ENCODE measurements at regions of chr3 and their contacts with region 1.

Region 1: GRCh38 chr3:101988591-101988990 is 139.3 kb downstream of the NFKBIZ start:
- DNase-seq: no peak
- ATAC-seq: peak; percentile 36
- H3K4me3 Mint-ChIP-seq: no peak overlapping the region
- H3K27ac Mint-ChIP-seq: peak overlapping the region; percentile 75
- H3K4me1 Mint-ChIP-seq: peaks cover 52% of the 10 kb centered on the region
- H3K27me3 Mint-ChIP-seq: no peaks in the 10 kb centered on the region
- CTCF ChIP-seq: no peak

Region 2: GRCh38 chr3:101976473-101976872 is 12.1 kb before region 1 on chr3:
- CTCF ChIA-PET with region 1: no interaction called
- POLR2A ChIA-PET with region 1: interaction called, 4 read pairs
- intact Hi-C with region 1: loop called (anchors 1 kb)
- DNase-seq: no peak
- ATAC-seq: no peak
- H3K4me3 Mint-ChIP-seq: peak overlapping the region; percentile 11
- H3K27ac Mint-ChIP-seq: no peak overlapping the region
- H3K4me1 Mint-ChIP-seq: peaks cover 32% of the 10 kb centered on the region
- H3K27me3 Mint-ChIP-seq: no peaks in the 10 kb centered on the region
- CTCF ChIP-seq: no peak

Region 3: GRCh38 chr3:102224128-102224527 is 235.5 kb after region 1 on chr3:
- CTCF ChIA-PET with region 1: interaction called, 4 read pairs
- POLR2A ChIA-PET with region 1: no interaction called
- intact Hi-C with region 1: loop called (anchors 1 kb)
- DNase-seq: no peak
- ATAC-seq: peak; percentile 72
- H3K4me3 Mint-ChIP-seq: no peak overlapping the region
- H3K27ac Mint-ChIP-seq: peak overlapping the region; percentile 36
- H3K4me1 Mint-ChIP-seq: peaks cover 44% of the 10 kb centered on the region
- H3K27me3 Mint-ChIP-seq: no peaks in the 10 kb centered on the region
- CTCF ChIP-seq: no peak